Heart left ventricle (tissue), 16 donors: ENCODE measurements at regions of chr18 and their contacts with region 1.

Region 1: GRCh38 chr18:2571200-2572143 is at the starts of genes METTL4 and NDC80:
- DNase-seq: peak; percentile 82 to 91 (median 88)
- ATAC-seq: peak; percentile 90 to 97 (median 94)
- H3K4me3 ChIP-seq: peak within 1 kb of the TSS; percentile 58 to 96 (median 76)
- H3K27ac ChIP-seq: peak within 1 kb of the TSS; percentile 93 to 98 (median 97)
- H3K4me1 ChIP-seq: peaks cover 0 to 35% (median 12%) of the 10 kb centered on the region in 12 donors
- H3K27me3 ChIP-seq: no peaks in the 10 kb centered on the region
- CTCF ChIP-seq: no peak
- POLR2A ChIP-seq: peak in 1 of 2 donors; percentile 57
- total RNA-seq, gene METTL4: 4.2 to 10.3 (median 5.8) TPM
- total RNA-seq, gene NDC80: 0.09 to 5.0 (median 0.43) TPM in 8 of 9 donors, not detected in the other

Region 2: DNA sequence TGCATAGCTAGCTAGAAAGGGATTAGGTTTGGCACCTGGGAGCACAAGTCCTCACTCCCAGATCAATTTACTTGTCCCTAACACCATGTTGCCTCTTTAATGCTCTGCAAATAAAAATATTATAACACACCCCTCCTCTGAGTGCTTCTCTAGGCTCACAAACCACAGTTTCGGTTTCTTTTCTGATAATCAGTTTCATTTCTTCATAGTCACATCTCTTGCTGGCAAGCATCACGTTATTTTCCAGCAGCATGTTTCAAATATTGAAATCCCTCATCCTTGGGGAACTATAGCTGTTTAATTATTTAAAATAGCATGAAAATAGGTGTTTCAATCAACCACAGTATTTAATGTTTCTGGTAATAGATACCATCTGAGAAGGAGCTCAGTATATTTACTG is 70.2 kb after region 1 on chr18:
- intact Hi-C with region 1: loop called in 1 of 10 experiments (anchors 5 kb)
- DNase-seq: no peak
- ATAC-seq: peak in 2 of 4 donors; percentile 38 to 43
- H3K4me3 ChIP-seq: peak overlapping the region in 9 of 12 donors; percentile 3 to 38 (median 18)
- H3K27ac ChIP-seq: peak overlapping the region; percentile 2 to 96 (median 36)
- H3K4me1 ChIP-seq: peaks cover 0 to 75% (median 10%) of the 10 kb centered on the region in 12 donors
- H3K27me3 ChIP-seq: no peaks in the 10 kb centered on the region
- CTCF ChIP-seq: no peak
- POLR2A ChIP-seq: no peak

Region 3: DNA sequence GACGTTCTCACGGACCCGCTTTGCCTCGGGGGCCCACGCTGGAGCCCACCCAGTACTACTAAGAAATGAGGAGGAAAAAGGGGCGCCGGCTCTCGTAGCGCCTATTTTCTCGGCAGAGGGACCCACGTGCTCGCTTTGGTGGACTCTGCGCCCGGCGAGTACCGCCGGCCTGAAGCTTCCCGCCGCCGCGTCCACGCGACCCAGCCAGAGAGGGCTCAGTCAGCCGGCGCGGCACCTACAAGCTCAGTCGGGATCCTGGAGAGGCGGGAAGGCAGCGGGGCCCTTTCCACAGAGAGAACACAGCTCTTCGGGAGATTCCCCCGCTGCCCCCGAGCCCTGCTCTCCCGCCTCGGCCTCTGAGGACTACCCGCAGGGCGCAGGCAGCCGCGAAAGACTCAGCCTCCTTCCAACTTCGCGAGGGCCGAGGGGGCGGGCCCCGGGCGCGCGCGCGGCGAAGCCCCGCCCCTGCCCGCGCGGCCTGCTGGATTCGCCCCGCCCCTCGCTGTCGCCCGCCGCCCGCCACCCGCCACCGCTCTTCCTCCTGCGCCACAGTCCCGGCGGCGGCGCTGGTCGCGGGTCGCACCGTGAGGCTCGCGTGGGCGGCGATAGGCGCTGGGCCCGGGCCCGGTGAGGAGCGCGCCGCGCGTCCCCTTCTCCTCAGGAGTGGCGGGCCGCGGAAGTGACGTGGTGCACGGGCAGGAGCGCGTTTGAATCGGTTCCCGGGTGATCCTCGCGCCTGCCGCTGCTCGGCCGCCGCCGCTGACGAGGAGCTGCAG is 83.9 kb after region 1 on chr18 and contains the start of gene SMCHD1:
- intact Hi-C with region 1: loop called in 7 of 10 experiments (anchors 1 to 5 kb)
- DNase-seq: peak; percentile 87 to 94 (median 91)
- ATAC-seq: peak; percentile 75 to 91 (median 88)
- H3K4me3 ChIP-seq: peak within 1 kb of the TSS; percentile 66 to 99 (median 92)
- H3K27ac ChIP-seq: peak within 1 kb of the TSS; percentile 94 to 99 (median 98)
- H3K4me1 ChIP-seq: peaks cover 0 to 44% (median 23%) of the 10 kb centered on the region in 12 donors
- H3K27me3 ChIP-seq: no peaks in the 10 kb centered on the region
- CTCF ChIP-seq: no peak
- POLR2A ChIP-seq: peak in 1 of 2 donors; percentile 87
- total RNA-seq, gene SMCHD1: 22.9 to 45.9 (median 31.3) TPM

Region 4: GRCh38 chr18:2697184-2697583 is 125.7 kb after region 1 on chr18:
- intact Hi-C with region 1: no loop called
- DNase-seq: no peak
- ATAC-seq: no peak
- H3K4me3 ChIP-seq: no peak overlapping the region
- H3K27ac ChIP-seq: no peak overlapping the region
- H3K4me1 ChIP-seq: peaks cover 0 to 3% (median 0%) of the 10 kb centered on the region in 12 donors
- H3K27me3 ChIP-seq: no peaks in the 10 kb centered on the region
- CTCF ChIP-seq: no peak
- POLR2A ChIP-seq: no peak